ENCODE measurements at regions of chr18 and their contacts with region 1.

Region 1: DNA sequence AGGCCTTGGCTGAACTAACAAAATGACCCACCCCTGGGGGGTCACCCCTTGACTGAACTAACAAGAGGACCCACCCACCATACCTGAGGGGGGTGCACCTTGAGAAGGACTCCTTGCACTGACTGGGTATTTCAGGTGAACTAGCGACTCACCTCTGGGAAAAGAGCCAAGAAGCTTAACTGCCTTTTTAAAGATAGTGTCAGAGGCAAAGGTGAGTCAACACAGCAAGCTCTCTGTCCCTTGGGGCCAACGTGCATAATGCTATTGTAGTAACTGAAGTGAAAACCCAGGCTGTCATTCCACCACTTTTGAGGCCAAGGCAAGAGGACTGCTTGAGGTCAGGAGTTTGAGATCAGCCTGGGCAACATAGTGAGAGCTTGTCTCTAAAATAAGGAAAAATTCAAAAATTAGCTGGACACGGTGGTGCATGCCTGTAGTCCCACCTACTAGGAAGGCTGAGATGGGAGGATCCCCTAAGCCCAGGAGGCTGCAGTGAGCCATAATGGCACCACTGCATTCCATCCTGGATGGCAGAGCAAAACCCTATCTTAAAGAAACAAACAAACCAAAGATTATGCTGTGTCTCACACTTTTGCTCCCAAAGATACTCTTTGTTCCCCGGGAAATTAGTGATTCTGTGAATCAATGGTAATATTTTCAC is 36.4 kb upstream of the ZCCHC2 start:
- DNase-seq: peak; percentile 73
- H3K4me3 Mint-ChIP-seq: peak overlapping the region; percentile 60
- H3K27ac Mint-ChIP-seq: peak overlapping the region; percentile 92
- H3K4me1 Mint-ChIP-seq: peaks cover 33% of the 10 kb centered on the region
- H3K27me3 Mint-ChIP-seq: no peaks in the 10 kb centered on the region
- CTCF ChIP-seq: no peak

Region 2: DNA sequence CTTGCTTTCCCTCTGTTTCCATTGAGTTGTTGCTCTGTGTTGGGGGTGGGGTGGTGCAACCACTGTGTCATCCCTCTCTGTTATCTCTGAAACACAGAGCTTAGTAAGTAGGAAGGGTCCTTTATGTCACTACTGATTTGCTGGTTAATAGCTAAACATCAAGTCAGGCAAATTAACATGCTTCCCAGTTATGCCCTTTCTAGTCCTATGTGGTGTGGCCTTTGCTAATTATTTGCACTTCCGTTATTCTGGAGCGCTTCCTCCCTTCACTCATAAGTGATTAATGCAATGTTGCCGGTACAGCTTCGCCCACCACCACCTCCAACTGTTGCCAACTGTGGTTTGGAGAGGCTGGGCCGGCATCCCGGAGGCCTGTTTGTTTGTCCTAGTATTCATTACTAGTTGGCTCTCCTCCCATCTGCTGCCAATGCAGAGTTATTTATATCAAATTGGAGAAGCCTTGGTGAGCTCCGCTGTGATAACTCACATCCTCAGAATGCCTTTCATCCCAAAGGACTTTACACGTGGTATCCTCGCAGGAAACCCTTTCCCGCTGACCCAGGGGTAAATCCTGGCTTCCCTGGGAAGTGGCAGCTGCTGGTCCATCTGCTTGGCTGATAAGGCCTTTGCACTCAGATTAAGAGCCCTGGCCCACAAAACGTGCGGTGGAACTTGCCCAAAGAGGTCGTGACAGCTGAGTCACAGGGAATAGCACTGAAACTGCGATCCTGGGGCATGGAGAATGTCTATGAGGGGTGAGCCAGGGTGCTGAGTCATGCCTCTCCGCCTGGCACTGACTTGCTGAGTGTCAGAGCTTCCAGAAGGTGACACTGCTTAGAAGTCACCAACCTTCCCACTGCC is 35.7 kb before region 1 on chr18:
- CTCF ChIA-PET with region 1: interaction called, 4 read pairs
- intact Hi-C with region 1: loop called (anchors 5 kb)
- DNase-seq: peak; percentile 86
- H3K4me3 Mint-ChIP-seq: peak overlapping the region; percentile 25
- H3K27ac Mint-ChIP-seq: peak overlapping the region; percentile 62
- H3K4me1 Mint-ChIP-seq: peaks cover 51% of the 10 kb centered on the region
- H3K27me3 Mint-ChIP-seq: no peaks in the 10 kb centered on the region
- CTCF ChIP-seq: no peak

Region 3: GRCh38 chr18:62460851-62461300 is 25.6 kb before region 1 on chr18:
- CTCF ChIA-PET with region 1: no interaction called
- intact Hi-C with region 1: loop called (anchors 2 kb)
- DNase-seq: no peak
- H3K4me3 Mint-ChIP-seq: no peak overlapping the region
- H3K27ac Mint-ChIP-seq: peak overlapping the region; percentile 46
- H3K4me1 Mint-ChIP-seq: peaks cover 18% of the 10 kb centered on the region
- H3K27me3 Mint-ChIP-seq: no peaks in the 10 kb centered on the region
- CTCF ChIP-seq: no peak

Region 4: DNA sequence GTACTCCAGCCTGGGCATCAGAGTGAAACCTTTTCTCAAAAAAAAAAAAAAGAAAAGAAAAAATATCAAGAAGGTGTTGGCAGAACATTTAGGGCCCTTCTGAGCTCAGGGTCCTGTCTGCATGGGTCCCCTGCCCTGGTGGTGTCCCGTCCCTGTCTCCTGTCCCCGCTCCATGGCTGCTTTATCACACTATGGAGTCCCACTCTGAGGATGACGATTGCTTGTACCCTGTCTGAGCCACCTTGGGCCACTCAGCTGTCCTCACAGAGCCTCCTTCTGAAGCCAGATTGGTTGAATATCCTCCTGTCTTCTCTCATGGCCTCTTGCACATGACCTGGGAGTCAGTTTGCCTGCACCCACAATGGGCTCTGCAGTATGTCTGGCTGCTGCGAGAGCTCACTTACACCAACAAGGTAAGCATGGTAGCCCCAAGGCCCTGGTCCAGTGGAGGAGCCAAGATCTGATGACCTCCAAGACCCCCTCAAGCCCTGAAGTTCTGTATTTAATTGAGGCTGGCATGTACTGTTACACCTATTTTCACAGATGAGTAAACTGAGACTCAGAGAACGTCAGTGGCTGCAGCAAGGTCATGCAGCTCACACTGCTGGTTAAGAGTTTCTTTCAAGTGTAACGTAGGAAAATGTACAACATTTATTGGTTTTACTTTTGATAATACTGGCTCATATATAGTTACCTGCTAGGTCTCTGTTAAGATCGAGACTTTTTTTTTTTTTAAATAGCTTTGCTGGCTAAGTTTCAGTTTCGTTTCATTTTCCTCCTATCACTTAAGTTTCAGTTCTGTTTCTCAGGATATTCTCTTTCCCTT is 19.4 kb after region 1 on chr18:
- CTCF ChIA-PET with region 1: interaction called, 3 read pairs
- intact Hi-C with region 1: loop called (anchors 2 kb)
- DNase-seq: no peak
- H3K4me3 Mint-ChIP-seq: peak overlapping the region; percentile 72
- H3K27ac Mint-ChIP-seq: peak overlapping the region; percentile 92
- H3K4me1 Mint-ChIP-seq: peaks cover 32% of the 10 kb centered on the region
- H3K27me3 Mint-ChIP-seq: no peaks in the 10 kb centered on the region
- CTCF ChIP-seq: no peak

Region 5: DNA sequence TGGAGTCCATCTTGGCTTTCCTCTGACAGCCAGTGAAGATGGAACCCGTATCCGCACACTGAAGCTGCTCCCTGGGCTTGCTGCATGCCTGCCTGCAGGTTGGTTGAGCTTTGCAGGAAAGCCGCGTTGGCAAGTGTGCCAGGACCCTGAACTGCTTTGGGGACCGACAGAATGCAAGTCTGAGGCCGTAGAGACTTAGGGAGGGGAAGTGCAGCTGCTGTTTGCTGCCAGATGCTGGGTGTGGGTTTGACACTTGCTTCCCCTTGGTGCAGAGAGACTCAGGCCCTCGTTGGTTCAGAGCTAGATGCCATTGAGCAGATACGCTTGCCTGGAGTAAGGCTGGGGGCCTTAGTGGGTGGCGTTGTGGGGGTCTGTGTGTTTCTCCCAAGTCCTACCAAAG is 215.8 kb after region 1 on chr18:
- CTCF ChIA-PET with region 1: no interaction called
- intact Hi-C with region 1: no loop called
- DNase-seq: no peak
- H3K4me3 Mint-ChIP-seq: no peak overlapping the region
- H3K27ac Mint-ChIP-seq: no peak overlapping the region
- H3K4me1 Mint-ChIP-seq: no peaks in the 10 kb centered on the region
- H3K27me3 Mint-ChIP-seq: no peaks in the 10 kb centered on the region
- CTCF ChIP-seq: no peak

Measured in Calu3 (cell line).